Activated CD4-positive, alpha-beta memory T cell treated with anti-CD3 and anti-CD28 coated beads for 36 hours (primary cell): ENCODE measurements at regions of chr18 and their contacts with region 1.

Region 1: GRCh38 chr18:21111341-21112139 is at the start of gene ROCK1:
- DNase-seq: peak; percentile 99
- H3K4me3 Mint-ChIP-seq: no peak within 1 kb of the TSS
- H3K27ac Mint-ChIP-seq: peak within 1 kb of the TSS; percentile 95
- H3K4me1 Mint-ChIP-seq: no peaks in the 10 kb centered on the region
- H3K27me3 Mint-ChIP-seq: no peaks in the 10 kb centered on the region
- total RNA-seq, gene ROCK1: 54.9 to 59.4 TPM

Region 2: GRCh38 chr18:20971886-20972267 is 139.7 kb before region 1 on chr18:
- CTCF ChIA-PET with region 1: no interaction called
- POLR2A ChIA-PET with region 1: no interaction called
- intact Hi-C with region 1: loop called (anchors 2 kb)
- DNase-seq: no peak
- H3K4me3 Mint-ChIP-seq: no peak overlapping the region
- H3K27ac Mint-ChIP-seq: no peak overlapping the region
- H3K4me1 Mint-ChIP-seq: no peaks in the 10 kb centered on the region
- H3K27me3 Mint-ChIP-seq: no peaks in the 10 kb centered on the region

Region 3: GRCh38 chr18:21049306-21049705 is 62.2 kb before region 1 on chr18:
- CTCF ChIA-PET with region 1: interaction called, 5 read pairs
- POLR2A ChIA-PET with region 1: interaction called, 3 read pairs
- intact Hi-C with region 1: loop called (anchors 2 kb)
- DNase-seq: no peak
- H3K4me3 Mint-ChIP-seq: no peak overlapping the region
- H3K27ac Mint-ChIP-seq: no peak overlapping the region
- H3K4me1 Mint-ChIP-seq: peaks cover 49% of the 10 kb centered on the region
- H3K27me3 Mint-ChIP-seq: no peaks in the 10 kb centered on the region

Region 4: GRCh38 chr18:21099442-21099841 is 12.1 kb before region 1 on chr18:
- CTCF ChIA-PET with region 1: no interaction called
- POLR2A ChIA-PET with region 1: no interaction called
- intact Hi-C with region 1: loop called (anchors 1 kb)
- DNase-seq: no peak
- H3K4me3 Mint-ChIP-seq: no peak overlapping the region
- H3K27ac Mint-ChIP-seq: no peak overlapping the region
- H3K4me1 Mint-ChIP-seq: peaks cover 75% of the 10 kb centered on the region
- H3K27me3 Mint-ChIP-seq: no peaks in the 10 kb centered on the region